ENCODE measurements at regions of chrX and their contacts with region 1.

Region 1: GRCh38 chrX:130024127-130024526 is 41.7 kb downstream of the BCORL1 start:
- DNase-seq: peak; percentile 83
- ATAC-seq: peak; percentile 100
- H3K4me3 Mint-ChIP-seq: no peak overlapping the region
- H3K27ac Mint-ChIP-seq: peak overlapping the region; percentile 61
- H3K4me1 Mint-ChIP-seq: peaks cover 8% of the 10 kb centered on the region
- H3K27me3 Mint-ChIP-seq: no peaks in the 10 kb centered on the region

Region 2: GRCh38 chrX:129781134-129781672 is 242.9 kb before region 1 on chrX:
- CTCF ChIA-PET with region 1: no interaction called
- POLR2A ChIA-PET with region 1: no interaction called
- intact Hi-C with region 1: no loop called
- DNase-seq: peak; percentile 91
- ATAC-seq: peak; percentile 80
- H3K4me3 Mint-ChIP-seq: peak overlapping the region; percentile 79
- H3K27ac Mint-ChIP-seq: peak overlapping the region; percentile 97
- H3K4me1 Mint-ChIP-seq: peaks cover 50% of the 10 kb centered on the region
- H3K27me3 Mint-ChIP-seq: no peaks in the 10 kb centered on the region

Region 3: GRCh38 chrX:129925305-129926092 is 98.6 kb before region 1 on chrX:
- CTCF ChIA-PET with region 1: interaction called, 76 read pairs
- POLR2A ChIA-PET with region 1: no interaction called
- intact Hi-C with region 1: loop called (anchors 1 kb)
- DNase-seq: peak; percentile 80
- ATAC-seq: peak; percentile 78
- H3K4me3 Mint-ChIP-seq: no peak overlapping the region
- H3K27ac Mint-ChIP-seq: no peak overlapping the region
- H3K4me1 Mint-ChIP-seq: peaks cover 1% of the 10 kb centered on the region
- H3K27me3 Mint-ChIP-seq: no peaks in the 10 kb centered on the region

Region 4: DNA sequence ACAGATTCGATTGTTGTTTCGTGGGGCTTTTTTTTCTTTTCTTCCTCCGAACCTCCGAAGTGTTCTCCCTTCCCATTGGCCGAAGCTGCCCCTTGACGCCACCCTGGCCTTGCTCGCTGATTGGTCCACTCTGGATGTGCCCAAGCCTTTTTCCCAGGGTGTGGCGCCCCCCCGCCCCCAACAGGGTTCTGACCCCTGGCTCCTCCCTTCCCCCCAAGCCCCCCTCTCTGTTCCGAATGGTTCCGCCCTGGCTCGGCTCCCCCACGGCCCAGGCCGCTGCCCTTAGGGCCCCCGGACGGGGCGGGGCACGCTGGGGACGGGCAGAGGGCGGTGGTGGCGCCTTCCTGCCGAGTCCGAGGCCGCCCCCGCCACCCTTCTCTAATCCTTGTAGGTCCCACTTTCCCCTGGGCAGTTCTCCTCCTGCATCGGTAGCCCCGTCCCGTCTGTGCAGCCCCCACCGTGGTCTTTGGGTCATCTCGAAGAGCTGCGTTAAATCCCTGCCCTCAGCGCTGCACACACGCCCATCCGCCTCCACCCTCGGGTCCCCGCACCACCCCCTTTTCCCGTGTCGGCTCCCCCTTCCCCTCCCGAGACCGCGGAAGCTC is 92.6 kb before region 1 on chrX:
- CTCF ChIA-PET with region 1: interaction called, 76 read pairs
- POLR2A ChIA-PET with region 1: interaction called, 3 read pairs
- intact Hi-C with region 1: loop called in 1 of 2 experiments (anchors 1 kb)
- DNase-seq: peak; percentile 75
- ATAC-seq: peak; percentile 78
- H3K4me3 Mint-ChIP-seq: peak overlapping the region; percentile 62
- H3K27ac Mint-ChIP-seq: peak overlapping the region; percentile 73
- H3K4me1 Mint-ChIP-seq: peaks cover 4% of the 10 kb centered on the region
- H3K27me3 Mint-ChIP-seq: peaks cover 2% of the 10 kb centered on the region